Activated CD4-positive, alpha-beta T cell treated with anti-CD3 and anti-CD28 coated beads, Interleukin-2, amount 10 ng/mL, durations not matched to agents 7 days and 5 days (primary cell): ENCODE measurements at regions of chr3 and their contacts with region 1.

Region 1: DNA sequence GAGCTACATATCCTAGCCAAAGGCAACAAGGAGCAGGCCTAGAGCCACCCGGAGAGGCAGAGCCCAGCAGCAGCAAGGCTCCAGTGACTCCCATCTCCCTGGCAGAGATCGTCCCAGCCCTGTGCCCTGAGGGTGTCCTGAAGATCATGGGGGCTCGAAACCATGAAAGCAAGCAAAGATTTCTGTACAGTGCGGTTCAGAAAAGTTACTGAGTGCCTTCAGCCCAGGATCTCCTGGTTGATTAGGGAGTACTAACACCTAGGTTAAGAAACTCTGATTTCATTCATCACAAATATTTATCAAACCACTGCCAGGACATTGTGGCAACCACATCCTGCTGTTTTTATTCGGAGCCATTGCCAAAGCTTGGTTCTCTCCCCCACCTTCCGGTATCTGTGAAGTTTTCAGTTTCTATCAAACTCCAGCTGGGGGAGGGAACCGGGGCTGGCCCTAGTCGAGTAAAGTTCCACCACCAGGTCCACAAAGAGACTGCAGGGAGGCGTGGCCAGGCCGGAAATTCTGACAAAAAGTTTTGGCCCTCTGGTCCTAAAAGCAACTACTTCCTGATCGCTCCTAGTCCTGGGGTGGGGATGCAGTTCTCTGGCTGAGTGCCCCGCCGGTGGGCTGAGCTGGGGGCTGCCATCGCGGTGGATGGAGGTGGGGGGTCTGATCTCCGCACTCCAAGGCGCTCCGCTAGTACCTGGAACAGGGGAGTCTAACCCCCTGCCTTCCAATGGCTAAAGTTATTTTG is 1.2 kb downstream of the RAB43 start:
- DNase-seq: peak; percentile 97
- H3K4me3 Mint-ChIP-seq: peak overlapping the region; percentile 92
- H3K27ac Mint-ChIP-seq: peak overlapping the region; percentile 98
- H3K4me1 Mint-ChIP-seq: peaks cover 49% of the 10 kb centered on the region
- H3K27me3 Mint-ChIP-seq: no peaks in the 10 kb centered on the region

Region 2: DNA sequence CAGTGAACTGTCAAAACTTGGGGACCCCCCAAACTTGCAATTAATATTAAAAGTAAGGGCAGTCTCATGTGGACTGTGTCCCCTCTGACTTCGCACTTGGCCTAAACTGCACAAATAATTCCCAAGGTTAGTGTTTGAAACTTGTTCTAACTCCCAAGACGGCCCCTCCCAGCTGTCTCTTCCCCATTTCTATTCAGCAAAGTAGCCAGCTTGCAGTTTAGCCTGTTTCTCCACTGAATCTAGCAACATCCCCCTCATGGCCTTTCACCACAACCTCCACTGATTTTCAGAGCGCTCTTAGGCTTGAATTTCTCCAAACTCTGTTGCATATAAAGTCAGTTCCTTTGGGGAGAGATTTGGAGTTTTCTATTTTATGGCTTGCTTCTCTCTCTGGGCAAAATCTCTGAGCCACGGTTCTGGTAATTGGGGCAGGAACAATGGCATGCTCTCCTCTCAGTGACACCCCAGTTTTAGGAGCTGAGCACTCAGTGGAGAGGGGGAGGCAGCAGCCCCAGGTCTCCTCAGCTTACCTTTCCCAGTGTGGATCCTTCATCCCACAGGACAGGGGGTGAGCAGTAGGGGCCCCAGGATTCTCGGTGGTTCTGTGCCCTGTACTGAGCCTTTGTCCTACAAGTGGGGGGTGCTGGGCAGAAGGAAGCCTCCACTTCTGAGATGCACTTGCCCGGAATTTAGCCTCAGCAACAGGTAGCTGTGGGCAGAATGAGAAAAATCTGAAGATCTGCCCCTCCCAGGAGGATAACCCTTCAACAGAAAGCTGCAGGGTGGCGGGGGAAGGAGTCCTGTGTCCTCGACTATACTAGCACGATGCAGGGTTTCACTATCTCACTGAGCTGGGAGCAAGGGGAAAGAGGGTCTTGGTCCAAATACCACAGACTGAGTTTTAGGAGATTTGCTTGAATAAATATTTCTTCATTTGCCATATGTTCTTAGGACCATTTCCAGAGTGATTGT is 588.1 kb before region 1 on chr3:
- CTCF ChIA-PET with region 1: no interaction called
- POLR2A ChIA-PET with region 1: no interaction called
- DNase-seq: no peak
- H3K4me3 Mint-ChIP-seq: no peak overlapping the region
- H3K27ac Mint-ChIP-seq: no peak overlapping the region
- H3K4me1 Mint-ChIP-seq: no peaks in the 10 kb centered on the region
- H3K27me3 Mint-ChIP-seq: peaks cover 68% of the 10 kb centered on the region

Region 3: DNA sequence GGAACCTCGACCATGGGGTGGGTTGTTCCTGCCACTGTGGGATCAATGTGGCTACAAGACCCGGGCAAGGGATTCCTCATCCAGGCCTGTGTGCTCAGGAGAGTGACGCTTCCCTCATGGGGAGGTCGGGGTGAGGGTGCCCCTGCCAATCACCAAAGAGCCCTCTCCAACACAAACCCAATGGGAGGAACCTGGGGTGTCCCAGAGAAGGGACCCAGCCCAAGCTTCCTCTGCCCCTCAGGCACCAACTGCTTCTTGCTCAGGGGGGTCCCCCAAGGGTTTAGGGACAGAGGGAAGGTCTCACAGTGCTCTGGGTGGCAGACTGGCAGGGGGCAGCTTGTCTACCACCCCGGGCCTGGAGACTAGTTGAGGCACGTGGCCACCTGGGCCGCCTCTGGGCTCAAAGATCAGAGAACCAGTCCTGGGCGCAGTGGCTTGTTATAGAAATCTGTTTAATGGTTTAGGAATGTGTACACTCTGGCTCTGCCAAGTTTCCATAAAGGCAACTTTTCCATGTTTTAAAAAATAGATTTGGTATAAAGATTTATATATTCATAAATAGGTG is 33.2 kb before region 1 on chr3:
- CTCF ChIA-PET with region 1: no interaction called
- POLR2A ChIA-PET with region 1: no interaction called
- DNase-seq: no peak
- H3K4me3 Mint-ChIP-seq: no peak overlapping the region
- H3K27ac Mint-ChIP-seq: no peak overlapping the region
- H3K4me1 Mint-ChIP-seq: peaks cover 2% of the 10 kb centered on the region
- H3K27me3 Mint-ChIP-seq: no peaks in the 10 kb centered on the region

Region 4: DNA sequence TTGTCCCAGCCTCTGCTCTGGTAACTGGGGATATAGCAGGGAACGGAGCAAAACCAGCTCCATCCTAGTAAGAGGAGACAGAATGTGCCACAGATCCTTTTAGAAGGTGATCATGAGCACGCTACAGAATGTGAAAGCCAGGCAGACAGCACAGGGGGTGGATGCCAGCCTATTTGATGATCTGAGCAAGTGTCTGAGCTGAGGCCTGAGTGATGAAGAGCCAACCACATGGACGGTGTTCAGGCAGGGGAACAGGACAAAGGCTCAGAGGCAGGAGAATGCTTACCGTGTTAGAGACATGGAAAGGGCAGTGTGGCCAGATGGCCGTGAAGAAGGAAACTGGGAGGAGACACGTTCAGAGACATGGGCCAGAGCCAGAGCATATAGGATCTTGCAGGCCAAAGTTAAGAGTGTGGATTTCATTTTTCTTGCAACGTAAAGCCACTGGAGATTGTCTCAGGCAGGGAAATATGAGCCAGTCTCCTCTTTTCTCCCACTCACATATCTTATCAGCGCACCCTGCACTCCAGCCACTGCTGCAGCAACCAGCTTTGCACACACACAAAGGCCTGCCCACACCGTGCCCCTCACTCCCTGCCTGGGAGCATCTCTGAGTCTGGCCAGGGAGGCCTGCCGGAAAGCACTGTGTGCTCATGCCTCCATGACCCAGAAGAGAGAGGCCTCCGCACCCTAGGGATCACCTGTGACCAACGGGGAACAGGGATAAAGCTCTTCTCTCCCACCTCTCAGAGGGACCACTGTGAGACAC is 18.9 kb before region 1 on chr3:
- CTCF ChIA-PET with region 1: interaction called, 22 read pairs
- POLR2A ChIA-PET with region 1: no interaction called
- DNase-seq: no peak
- H3K4me3 Mint-ChIP-seq: no peak overlapping the region
- H3K27ac Mint-ChIP-seq: peak overlapping the region; percentile 54
- H3K4me1 Mint-ChIP-seq: peaks cover 46% of the 10 kb centered on the region
- H3K27me3 Mint-ChIP-seq: no peaks in the 10 kb centered on the region

Region 5: DNA sequence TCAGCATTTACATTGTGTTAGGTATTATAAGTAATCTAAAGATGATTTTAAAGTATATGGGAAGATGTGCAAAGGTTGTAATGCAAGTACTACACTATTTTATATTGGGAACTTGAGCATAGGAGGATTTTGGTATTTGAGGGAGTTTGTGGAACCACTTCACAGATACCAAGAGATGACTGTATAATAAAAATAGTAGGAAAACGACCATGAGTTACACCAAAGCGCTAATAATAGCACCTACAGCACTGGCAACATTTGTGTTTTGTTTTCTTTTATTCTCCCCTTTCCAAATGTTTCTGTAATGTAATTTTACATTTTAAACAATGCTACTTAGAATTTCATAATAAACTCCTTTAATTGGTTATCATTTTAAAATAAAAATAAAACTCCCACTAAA is 52.8 kb after region 1 on chr3:
- CTCF ChIA-PET with region 1: no interaction called
- POLR2A ChIA-PET with region 1: no interaction called
- DNase-seq: no peak
- H3K4me3 Mint-ChIP-seq: no peak overlapping the region
- H3K27ac Mint-ChIP-seq: no peak overlapping the region
- H3K4me1 Mint-ChIP-seq: peaks cover 54% of the 10 kb centered on the region
- H3K27me3 Mint-ChIP-seq: no peaks in the 10 kb centered on the region